GM12878 (cell line): ENCODE measurements at regions of chr2 and their contacts with region 1.

Region 1: GRCh38 chr2:200363279-200363678 is 56.8 kb downstream of the SPATS2L start:
- DNase-seq: no peak
- ATAC-seq: no peak
- H3K4me3 ChIP-seq: no peak overlapping the region
- H3K27ac ChIP-seq: no peak overlapping the region
- H3K4me1 ChIP-seq: no peaks in the 10 kb centered on the region
- H3K27me3 ChIP-seq: no peaks in the 10 kb centered on the region
- CTCF ChIP-seq: no peak
- EP300 ChIP-seq: no peak
- POLR2A ChIP-seq: no peak
- RAD21 ChIP-seq: no peak

Region 2: DNA sequence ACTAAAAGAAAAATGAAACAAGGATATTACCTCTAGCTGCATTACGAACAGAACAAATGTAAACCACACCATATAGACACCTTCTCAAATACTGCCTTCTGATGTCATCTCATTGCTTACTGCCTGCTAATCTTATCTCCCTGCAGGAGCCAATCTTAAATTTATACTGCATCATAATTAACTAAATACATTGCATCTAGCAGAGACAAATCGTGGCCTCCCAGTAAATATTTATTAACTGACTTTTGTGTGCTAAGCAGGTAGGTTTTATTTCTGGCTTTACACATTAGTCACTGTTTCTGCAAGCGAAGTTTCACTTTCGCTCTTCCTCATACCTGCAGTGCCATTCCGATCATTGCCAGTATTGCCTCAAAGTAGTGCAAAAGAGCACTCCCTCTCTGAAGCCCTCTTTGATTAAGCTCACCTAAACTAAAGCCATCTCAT is 10.7 kb after region 1 on chr2:
- CTCF ChIA-PET with region 1: interaction called, 3 read pairs
- POLR2A ChIA-PET with region 1: interaction called, 8 read pairs
- RAD21 ChIA-PET with region 1: interaction called, 3 read pairs
- SMC1A ChIA-PET with region 1: interaction called, 11 read pairs
- in situ Hi-C with region 1: no loop called
- intact Hi-C with region 1: no loop called
- DNase-seq: peak; percentile 68
- ATAC-seq: peak; percentile 96
- H3K4me3 ChIP-seq: peak overlapping the region; percentile 52
- H3K27ac ChIP-seq: peak overlapping the region; percentile 68
- H3K4me1 ChIP-seq: peaks cover 30% of the 10 kb centered on the region
- H3K27me3 ChIP-seq: no peaks in the 10 kb centered on the region
- CTCF ChIP-seq: no peak
- EP300 ChIP-seq: no peak; a peak in 1 of 4 replicates
- POLR2A ChIP-seq: no peak
- RAD21 ChIP-seq: no peak